ENCODE measurements at regions of chr6 and their contacts with region 1.

Region 1: GRCh38 chr6:137233911-137234863 is 15.0 kb upstream of the IFNGR1 start:
- DNase-seq: no peak
- CTCF ChIP-seq: no peak

Region 2: DNA sequence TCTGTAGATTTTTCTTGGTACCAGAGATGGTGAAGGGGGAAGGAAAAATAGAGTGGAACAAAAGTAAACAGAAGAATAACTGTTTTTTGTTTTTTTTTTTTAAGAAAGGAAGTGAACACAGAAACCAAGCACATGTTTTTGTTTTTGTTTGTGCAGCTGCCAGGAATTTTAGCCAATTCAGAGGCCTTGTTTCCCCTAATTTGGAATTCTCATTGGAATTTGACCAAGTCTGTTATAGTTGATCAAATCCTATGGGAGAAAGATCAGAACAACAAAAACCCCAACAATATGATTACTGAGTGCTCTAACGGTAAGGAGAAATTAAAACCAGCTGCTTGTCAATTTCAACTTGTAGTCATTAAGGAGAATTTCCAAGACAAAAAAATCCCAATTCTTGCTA is 42.5 kb before region 1 on chr6:
- CTCF ChIA-PET with region 1: no interaction called
- POLR2A ChIA-PET with region 1: no interaction called
- DNase-seq: no peak
- CTCF ChIP-seq: no peak

Region 3: GRCh38 chr6:137223370-137224131 is 10.6 kb before region 1 on chr6:
- CTCF ChIA-PET with region 1: interaction called, 16 read pairs
- POLR2A ChIA-PET with region 1: no interaction called
- DNase-seq: no peak
- CTCF ChIP-seq: no peak

Measured in GM10248 (cell line).